ENCODE measurements at regions of chr4 and their contacts with region 1.

Region 1: GRCh38 chr4:2418650-2419571 is at the start of gene CFAP99:
- DNase-seq: peak; percentile 97
- H3K4me3 Mint-ChIP-seq: peak within 1 kb of the TSS; percentile 81
- H3K27ac Mint-ChIP-seq: no peak within 1 kb of the TSS
- H3K4me1 Mint-ChIP-seq: peaks cover 38% of the 10 kb centered on the region
- H3K27me3 Mint-ChIP-seq: peaks cover 37% of the 10 kb centered on the region
- total RNA-seq, gene CFAP99: not detected

Region 2: DNA sequence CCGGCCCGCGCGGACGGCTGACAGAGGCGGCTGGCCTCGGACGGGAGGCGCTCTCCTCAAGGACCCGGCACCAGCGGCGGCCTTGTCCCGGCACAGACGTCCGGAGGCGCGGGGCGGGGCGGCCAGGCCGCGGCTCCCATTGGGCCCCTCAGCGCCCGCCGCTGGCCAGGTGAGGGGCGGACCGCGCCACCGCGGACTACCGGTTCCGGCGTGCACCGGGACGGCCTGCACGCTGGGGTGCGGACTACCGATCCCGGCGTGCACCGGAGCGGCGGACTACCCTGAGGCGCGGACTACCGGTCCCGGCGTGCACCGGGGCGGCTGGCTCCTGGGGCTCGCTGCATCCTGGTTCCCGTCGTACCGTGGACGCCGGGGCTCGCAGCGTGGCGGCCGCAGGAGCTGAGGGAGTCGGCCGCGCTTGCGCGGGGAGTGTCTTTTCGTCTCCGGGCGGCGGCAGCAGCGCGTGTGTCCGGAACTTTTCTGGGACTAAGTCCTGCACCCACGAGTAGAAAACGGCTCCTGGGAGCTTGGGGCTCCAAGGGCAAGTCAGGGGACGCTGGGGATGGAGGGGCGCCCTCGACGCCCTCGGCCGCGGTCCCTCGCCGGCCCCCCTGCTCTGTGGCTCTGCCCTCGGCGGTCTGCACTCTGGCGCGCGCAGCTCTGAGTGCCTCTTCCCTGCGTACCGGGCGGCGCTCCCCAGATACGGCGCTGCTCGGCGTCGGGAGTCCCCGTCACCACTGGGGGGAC is 562.7 kb before region 1 on chr4 and contains the start of gene LETM1:
- CTCF ChIA-PET with region 1: no interaction called
- intact Hi-C with region 1: loop called (anchors 5 kb)
- DNase-seq: peak; percentile 95
- H3K4me3 Mint-ChIP-seq: peak within 1 kb of the TSS; percentile 79
- H3K27ac Mint-ChIP-seq: no peak within 1 kb of the TSS
- H3K4me1 Mint-ChIP-seq: peaks cover 38% of the 10 kb centered on the region
- H3K27me3 Mint-ChIP-seq: no peaks in the 10 kb centered on the region
- total RNA-seq, gene LETM1: 36.3 to 40.5 TPM

Region 3: DNA sequence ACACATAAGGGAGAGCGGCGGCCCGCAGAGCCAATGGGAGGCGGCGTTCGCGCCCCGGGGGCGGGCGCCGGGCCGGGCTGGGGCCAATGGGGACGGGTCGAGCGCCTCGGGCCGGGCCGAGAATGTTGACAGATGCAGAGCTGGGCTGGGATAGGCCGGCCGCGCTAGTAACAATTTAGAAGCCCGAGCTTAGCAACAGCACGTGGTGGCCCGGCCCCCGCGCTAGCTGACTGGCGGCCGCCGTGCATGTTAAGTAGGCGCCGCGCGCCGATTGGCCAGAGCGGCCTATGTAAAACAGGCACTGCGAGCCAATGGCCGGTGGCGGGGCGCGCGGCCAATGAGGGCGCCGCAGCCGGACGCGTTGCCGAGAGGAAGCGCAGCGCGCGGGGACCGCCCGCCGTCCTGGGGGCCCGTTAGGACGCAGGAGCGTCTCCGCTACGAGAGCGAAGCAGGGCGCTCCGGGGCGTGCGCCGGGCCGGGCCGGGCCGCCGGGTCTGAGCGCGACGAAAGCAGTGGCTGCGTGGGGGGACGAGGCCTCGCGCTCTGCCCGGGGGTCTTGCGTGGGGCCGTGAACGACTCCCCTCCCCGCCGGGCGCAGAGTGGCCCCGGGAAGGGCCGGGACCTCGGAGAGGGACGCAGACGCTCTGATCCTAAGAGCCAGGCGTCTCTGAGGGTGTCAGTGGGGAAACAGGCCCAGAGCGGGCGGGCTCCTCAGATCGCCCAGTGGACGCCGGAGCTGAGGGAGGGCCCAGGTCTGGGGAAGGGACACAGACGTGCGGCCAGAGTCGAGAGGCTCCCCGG is 156.6 kb before region 1 on chr4:
- CTCF ChIA-PET with region 1: interaction called, 3 read pairs
- intact Hi-C with region 1: loop called (anchors 1 kb)
- DNase-seq: peak; percentile 98
- H3K4me3 Mint-ChIP-seq: peak overlapping the region; percentile 69
- H3K27ac Mint-ChIP-seq: no peak overlapping the region
- H3K4me1 Mint-ChIP-seq: peaks cover 2% of the 10 kb centered on the region
- H3K27me3 Mint-ChIP-seq: no peaks in the 10 kb centered on the region

Region 4: GRCh38 chr4:2281575-2282343 is 137.2 kb before region 1 on chr4:
- CTCF ChIA-PET with region 1: interaction called, 7 read pairs
- intact Hi-C with region 1: loop called (anchors 1 kb)
- DNase-seq: peak; percentile 94
- H3K4me3 Mint-ChIP-seq: peak overlapping the region; percentile 17
- H3K27ac Mint-ChIP-seq: peak overlapping the region; percentile 98
- H3K4me1 Mint-ChIP-seq: peaks cover 37% of the 10 kb centered on the region
- H3K27me3 Mint-ChIP-seq: no peaks in the 10 kb centered on the region

Region 5: DNA sequence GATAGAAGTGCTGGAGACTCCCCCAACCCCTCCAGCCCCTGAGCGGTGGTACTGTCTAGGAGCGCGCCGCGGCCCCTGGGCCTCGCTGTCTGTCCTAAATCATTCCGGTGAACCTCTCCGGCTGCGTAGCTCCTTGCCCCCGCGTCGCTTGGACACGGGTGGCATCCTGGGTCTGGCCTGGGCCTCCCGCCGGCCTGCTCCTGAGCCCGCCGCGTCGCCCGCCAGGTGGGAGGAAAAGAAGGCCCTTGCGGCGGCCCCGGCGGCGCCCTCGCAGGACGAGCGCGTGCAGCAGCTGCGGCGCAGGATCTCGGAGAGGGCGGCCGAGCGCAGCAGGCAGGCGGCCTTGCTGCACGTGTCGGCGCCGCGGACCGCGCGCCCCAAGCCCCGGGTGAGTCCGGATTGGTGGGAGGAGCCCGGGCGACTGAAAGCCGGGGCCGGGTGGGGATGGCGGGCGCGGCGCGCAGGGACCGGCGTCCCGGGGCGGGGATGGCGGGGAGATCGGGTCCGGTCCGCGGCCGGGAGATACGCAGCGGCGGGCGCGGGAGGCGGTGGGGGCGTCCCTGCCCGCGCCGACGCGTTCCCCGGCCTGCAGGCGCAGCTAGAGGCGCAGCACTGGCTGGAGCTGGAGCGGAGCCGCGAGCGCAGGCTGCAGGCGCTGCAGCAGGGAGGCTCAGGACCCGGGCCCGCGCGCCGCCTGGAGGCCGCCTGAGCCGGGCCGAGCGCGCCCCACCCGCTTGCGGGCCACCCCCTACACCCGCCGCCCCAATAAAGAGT is 43.5 kb after region 1 on chr4:
- CTCF ChIA-PET with region 1: no interaction called
- intact Hi-C with region 1: loop called (anchors 1 kb)
- DNase-seq: peak; percentile 65
- H3K4me3 Mint-ChIP-seq: peak overlapping the region; percentile 58
- H3K27ac Mint-ChIP-seq: no peak overlapping the region
- H3K4me1 Mint-ChIP-seq: peaks cover 13% of the 10 kb centered on the region
- H3K27me3 Mint-ChIP-seq: no peaks in the 10 kb centered on the region

Region 6: GRCh38 chr4:2934813-2935761 is 516.2 kb after region 1 on chr4:
- CTCF ChIA-PET with region 1: no interaction called
- intact Hi-C with region 1: loop called (anchors 10 kb)
- DNase-seq: peak; percentile 97
- H3K4me3 Mint-ChIP-seq: peak overlapping the region; percentile 89
- H3K27ac Mint-ChIP-seq: peak overlapping the region; percentile 96
- H3K4me1 Mint-ChIP-seq: peaks cover 57% of the 10 kb centered on the region
- H3K27me3 Mint-ChIP-seq: no peaks in the 10 kb centered on the region

Measured in activated naive CD4-positive, alpha-beta T cell treated with anti-CD3 and anti-CD28 coated beads for 36 hours (primary cell).